ENCODE measurements at regions of chr1 and their contacts with region 1.

Region 1: DNA sequence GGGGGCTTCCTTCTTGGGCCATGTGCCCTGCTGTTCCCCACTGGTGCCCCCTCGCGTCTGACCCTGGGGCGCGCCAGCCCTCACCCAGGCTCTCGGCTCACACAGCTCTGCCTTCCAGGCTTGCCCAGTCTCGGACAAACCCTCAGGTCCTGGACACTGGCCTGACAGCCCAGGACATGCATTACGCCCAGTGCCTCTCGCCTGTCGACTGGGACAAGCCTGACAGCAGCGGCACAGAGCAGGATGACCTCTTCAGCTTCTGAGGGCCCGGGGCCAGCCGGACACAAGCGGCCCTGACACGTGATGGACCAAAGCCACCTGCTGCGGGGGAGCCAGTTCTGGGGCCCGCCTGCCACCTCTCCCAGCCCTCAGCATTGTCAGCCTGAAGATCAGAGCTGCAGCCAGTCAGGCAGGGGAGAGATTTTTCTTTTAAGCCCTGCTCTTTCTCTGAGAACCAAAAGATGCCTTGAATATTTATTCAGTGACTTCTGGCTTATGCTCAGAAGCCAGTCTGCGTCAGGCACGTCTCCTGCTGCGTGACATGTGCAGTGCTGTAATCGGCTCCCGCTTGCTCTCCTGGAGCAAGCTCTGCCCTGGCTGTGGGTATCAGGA is 23.4 kb downstream of the LDLRAP1 start:
- DNase-seq: peak; percentile 67
- ATAC-seq: peak; percentile 29
- H3K4me3 Mint-ChIP-seq: peak overlapping the region; percentile 86
- H3K27ac Mint-ChIP-seq: peak overlapping the region; percentile 97
- H3K4me1 Mint-ChIP-seq: peaks cover 60% of the 10 kb centered on the region
- H3K27me3 Mint-ChIP-seq: no peaks in the 10 kb centered on the region

Region 2: GRCh38 chr1:25543425-25544242 is 23.2 kb before region 1 on chr1 and contains the start of gene LDLRAP1:
- POLR2A ChIA-PET with region 1: interaction called, 56 read pairs
- DNase-seq: peak; percentile 83
- ATAC-seq: peak; percentile 82
- H3K4me3 Mint-ChIP-seq: peak within 1 kb of the TSS; percentile 88
- H3K27ac Mint-ChIP-seq: peak within 1 kb of the TSS; percentile 70
- H3K4me1 Mint-ChIP-seq: peaks cover 32% of the 10 kb centered on the region
- H3K27me3 Mint-ChIP-seq: peaks cover 2% of the 10 kb centered on the region
- total RNA-seq, gene LDLRAP1: 77.3 to 79.6 TPM

Region 3: GRCh38 chr1:25549273-25550154 is 17.3 kb before region 1 on chr1:
- POLR2A ChIA-PET with region 1: interaction called, 56 read pairs
- DNase-seq: peak; percentile 82
- ATAC-seq: peak; percentile 92
- H3K4me3 Mint-ChIP-seq: peak overlapping the region; percentile 74
- H3K27ac Mint-ChIP-seq: peak overlapping the region; percentile 91
- H3K4me1 Mint-ChIP-seq: peaks cover 76% of the 10 kb centered on the region
- H3K27me3 Mint-ChIP-seq: no peaks in the 10 kb centered on the region

Measured in activated naive CD8-positive, alpha-beta T cell treated with anti-CD3 and anti-CD28 coated beads, Interleukin-2, amount 10 ng/mL, durations not matched to agents 7 days and 5 days (primary cell).